ENCODE measurements at regions of chr9 and their contacts with region 1.

Region 1: GRCh38 chr9:92764988-92765936 is 629 bp upstream of the BICD2 start:
- DNase-seq: peak; percentile 99
- H3K4me3 Mint-ChIP-seq: peak overlapping the region; percentile 84
- H3K27ac Mint-ChIP-seq: peak overlapping the region; percentile 91
- H3K4me1 Mint-ChIP-seq: peaks cover 49% of the 10 kb centered on the region
- H3K27me3 Mint-ChIP-seq: no peaks in the 10 kb centered on the region

Region 2: GRCh38 chr9:92115071-92115858 is 650.0 kb before region 1 on chr9 and contains the start of gene SPTLC1:
- CTCF ChIA-PET with region 1: no interaction called
- intact Hi-C with region 1: loop called (anchors 2 kb)
- DNase-seq: peak; percentile 95
- H3K4me3 Mint-ChIP-seq: peak within 1 kb of the TSS; percentile 96
- H3K27ac Mint-ChIP-seq: peak within 1 kb of the TSS; percentile 97
- H3K4me1 Mint-ChIP-seq: peaks cover 25% of the 10 kb centered on the region
- H3K27me3 Mint-ChIP-seq: no peaks in the 10 kb centered on the region
- total RNA-seq, gene SPTLC1: 32.0 to 38.4 TPM

Region 3: GRCh38 chr9:92535940-92536850 is 229.1 kb before region 1 on chr9 and contains the start of gene ECM2:
- CTCF ChIA-PET with region 1: no interaction called
- intact Hi-C with region 1: no loop called
- DNase-seq: no peak
- H3K4me3 Mint-ChIP-seq: no peak within 1 kb of the TSS
- H3K27ac Mint-ChIP-seq: no peak within 1 kb of the TSS
- H3K4me1 Mint-ChIP-seq: peaks cover 2% of the 10 kb centered on the region
- H3K27me3 Mint-ChIP-seq: no peaks in the 10 kb centered on the region
- total RNA-seq, gene ECM2: not detected

Region 4: DNA sequence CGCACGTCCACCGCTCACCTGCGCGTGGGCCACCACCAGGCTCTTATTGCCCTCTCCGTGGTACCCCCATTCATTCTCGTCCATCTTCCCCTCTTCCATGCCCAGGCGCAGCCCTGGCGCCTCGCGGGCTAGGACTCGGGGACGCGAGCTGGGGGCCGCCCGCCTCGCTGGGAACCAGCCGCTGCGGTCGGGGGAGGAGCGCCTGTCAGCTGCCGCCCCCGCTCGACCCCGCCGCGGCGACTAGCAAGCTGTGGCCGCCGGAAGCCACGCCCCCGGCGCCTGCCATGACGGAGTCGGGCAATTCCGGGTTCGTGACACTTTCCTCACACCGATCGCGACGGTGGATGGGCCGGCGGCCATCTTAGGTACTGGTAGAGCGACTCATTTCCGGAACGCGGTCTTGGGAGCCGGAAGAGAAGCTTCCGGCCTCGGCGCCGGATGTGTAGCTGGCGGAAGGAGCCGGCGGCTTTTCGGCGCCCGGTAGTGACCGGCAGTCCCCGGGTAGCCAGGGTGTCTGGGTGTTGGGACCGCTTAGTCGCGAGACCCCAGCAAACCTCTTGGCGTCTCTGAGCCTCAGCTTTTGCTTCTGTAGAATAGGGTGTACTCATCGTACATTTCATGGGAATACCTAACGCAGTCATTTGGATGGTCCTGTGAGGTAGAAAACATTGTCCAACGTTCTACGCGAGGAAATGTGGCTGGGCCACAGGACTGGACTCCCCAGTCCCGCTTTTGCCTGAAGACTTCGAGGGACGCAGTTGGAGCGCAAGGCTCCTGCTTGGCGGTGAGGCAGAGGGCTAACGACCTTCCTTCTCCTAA is 95.2 kb before region 1 on chr9 and contains the start of gene IPPK:
- CTCF ChIA-PET with region 1: no interaction called
- intact Hi-C with region 1: loop called (anchors 1 kb)
- DNase-seq: peak; percentile 98
- H3K4me3 Mint-ChIP-seq: peak within 1 kb of the TSS; percentile 93
- H3K27ac Mint-ChIP-seq: peak within 1 kb of the TSS; percentile 90
- H3K4me1 Mint-ChIP-seq: peaks cover 26% of the 10 kb centered on the region
- H3K27me3 Mint-ChIP-seq: no peaks in the 10 kb centered on the region
- total RNA-seq, gene IPPK: 7.6 to 8.2 TPM

Region 5: GRCh38 chr9:92808726-92809451 is 43.6 kb after region 1 on chr9:
- CTCF ChIA-PET with region 1: no interaction called
- intact Hi-C with region 1: loop called (anchors 1 kb)
- DNase-seq: peak; percentile 72
- H3K4me3 Mint-ChIP-seq: peak overlapping the region; percentile 81
- H3K27ac Mint-ChIP-seq: no peak overlapping the region
- H3K4me1 Mint-ChIP-seq: peaks cover 9% of the 10 kb centered on the region
- H3K27me3 Mint-ChIP-seq: peaks cover 44% of the 10 kb centered on the region

Region 6: DNA sequence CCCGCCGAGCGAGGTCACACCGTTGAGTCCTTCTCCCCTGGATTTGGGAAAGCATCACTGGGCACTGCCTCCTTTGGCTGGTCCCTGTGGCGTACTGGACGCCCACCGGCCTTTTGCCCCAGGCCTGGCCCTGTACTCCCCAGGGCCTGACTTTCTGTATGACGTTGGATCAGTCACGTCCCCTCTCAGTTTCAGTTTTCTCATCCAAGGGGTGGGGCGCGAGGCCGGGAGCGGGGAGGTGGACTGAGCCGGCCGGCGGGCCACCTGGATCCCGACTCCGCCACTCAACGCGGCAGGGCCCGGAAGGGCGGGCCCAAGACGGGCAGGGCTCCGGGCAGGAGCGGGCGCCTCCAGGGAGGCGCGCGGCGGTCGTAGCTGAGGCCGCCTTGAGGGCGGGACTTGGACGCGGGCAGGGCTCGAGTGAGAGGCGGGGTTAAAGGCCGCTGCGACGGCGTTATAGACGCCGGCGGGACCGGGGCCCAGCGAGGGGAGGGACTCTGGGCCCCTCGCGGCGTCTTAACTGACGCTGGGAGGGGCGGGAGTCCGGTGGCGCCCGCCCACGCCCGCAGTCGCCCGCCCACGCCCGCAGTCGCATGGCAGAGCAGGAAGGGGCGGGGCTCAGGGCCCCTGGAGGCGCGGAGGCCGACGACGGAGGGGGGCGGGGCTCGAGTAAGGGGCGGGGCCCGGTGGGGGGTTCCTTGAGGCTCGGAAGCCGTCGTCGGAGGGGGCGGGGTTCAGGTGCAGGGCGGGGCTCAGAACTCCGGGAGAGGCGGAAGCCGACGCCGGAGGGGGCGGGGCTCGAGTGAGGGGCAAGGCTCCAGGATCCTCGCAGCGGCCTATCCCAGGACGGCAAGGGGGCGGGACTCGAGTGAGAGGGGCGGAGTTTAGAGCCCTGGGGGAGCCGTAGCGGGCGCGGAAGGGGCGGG is 330.2 kb after region 1 on chr9:
- CTCF ChIA-PET with region 1: no interaction called
- intact Hi-C with region 1: loop called (anchors 1 kb)
- DNase-seq: peak; percentile 100
- H3K4me3 Mint-ChIP-seq: peak overlapping the region; percentile 84
- H3K27ac Mint-ChIP-seq: peak overlapping the region; percentile 95
- H3K4me1 Mint-ChIP-seq: peaks cover 74% of the 10 kb centered on the region
- H3K27me3 Mint-ChIP-seq: no peaks in the 10 kb centered on the region

Region 7: DNA sequence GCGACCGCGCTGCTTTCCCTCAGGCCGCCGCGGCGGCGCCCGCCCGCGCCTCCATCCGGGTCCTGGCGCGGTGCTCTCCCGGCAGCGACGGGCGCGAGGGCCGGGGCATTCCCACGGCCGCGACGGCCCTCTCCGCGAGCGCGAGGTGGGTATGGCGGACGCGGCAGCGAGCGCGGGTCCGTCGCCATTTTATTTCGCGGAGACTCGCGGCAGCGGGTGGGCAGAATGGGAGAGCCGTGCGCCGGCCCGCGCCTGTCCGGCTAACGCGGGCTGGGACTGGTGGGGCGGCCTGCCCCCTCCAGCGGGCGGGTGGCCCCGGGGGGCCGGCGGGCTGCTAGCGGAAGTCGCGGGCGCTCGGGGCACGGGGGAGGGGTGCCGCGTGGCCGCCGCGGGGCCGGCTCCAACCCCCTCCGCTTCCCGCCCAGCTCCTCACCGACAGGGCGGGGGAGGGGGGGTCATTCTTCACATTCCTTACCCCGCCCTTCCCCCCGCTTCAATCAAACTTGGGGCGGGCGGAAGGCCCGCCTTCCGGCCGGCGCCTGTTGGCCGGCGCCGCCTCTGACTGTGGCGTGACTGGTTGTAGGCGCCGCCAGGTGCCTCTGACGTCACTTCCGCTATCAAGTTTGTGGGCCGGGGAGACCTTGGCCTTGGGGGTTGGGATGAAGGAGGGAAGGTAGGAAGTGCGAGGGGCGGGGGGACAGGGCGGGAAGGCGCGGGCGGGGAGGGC is 1401.1 kb after region 1 on chr9:
- CTCF ChIA-PET with region 1: no interaction called
- intact Hi-C with region 1: loop called (anchors 2 kb)
- DNase-seq: peak; percentile 97
- H3K4me3 Mint-ChIP-seq: peak overlapping the region; percentile 86
- H3K27ac Mint-ChIP-seq: peak overlapping the region; percentile 87
- H3K4me1 Mint-ChIP-seq: peaks cover 41% of the 10 kb centered on the region
- H3K27me3 Mint-ChIP-seq: no peaks in the 10 kb centered on the region

Measured in activated naive CD4-positive, alpha-beta T cell treated with anti-CD3 and anti-CD28 coated beads for 36 hours (primary cell).